BJ (cell line): ENCODE measurements at regions of chr1 and their contacts with region 1.

Region 1: GRCh38 chr1:93814059-93814794 is 64.8 kb downstream of the DNTTIP2 start:
- DNase-seq: no peak
- H3K4me3 ChIP-seq: no peak overlapping the region
- H3K27me3 ChIP-seq: no peaks in the 10 kb centered on the region
- CTCF ChIP-seq: peak; percentile 97

Region 2: GRCh38 chr1:93447516-93448291 is 366.5 kb before region 1 on chr1 and contains the start of gene FNBP1L:
- CTCF ChIA-PET with region 1: interaction called, 12 read pairs
- POLR2A ChIA-PET with region 1: no interaction called
- DNase-seq: no peak
- H3K4me3 ChIP-seq: peak within 1 kb of the TSS; percentile 62
- H3K27me3 ChIP-seq: no peaks in the 10 kb centered on the region
- CTCF ChIP-seq: no peak
- polyA plus RNA-seq, gene FNBP1L: 5.5 and 12.4 TPM in 2 replicates

Region 3: GRCh38 chr1:93629099-93630059 is 184.8 kb before region 1 on chr1:
- CTCF ChIA-PET with region 1: interaction called, 261 read pairs
- POLR2A ChIA-PET with region 1: interaction called, 5 read pairs
- DNase-seq: no peak
- H3K4me3 ChIP-seq: no peak overlapping the region
- H3K27me3 ChIP-seq: no peaks in the 10 kb centered on the region
- CTCF ChIP-seq: peak; percentile 72

Region 4: GRCh38 chr1:93680757-93681550 is 133.3 kb before region 1 on chr1:
- CTCF ChIA-PET with region 1: interaction called, 74 read pairs
- POLR2A ChIA-PET with region 1: no interaction called
- DNase-seq: peak; percentile 63
- H3K4me3 ChIP-seq: peak overlapping the region; percentile 78
- H3K27me3 ChIP-seq: no peaks in the 10 kb centered on the region
- CTCF ChIP-seq: peak; percentile 75

Region 5: GRCh38 chr1:93692983-93693591 is 121.1 kb before region 1 on chr1:
- CTCF ChIA-PET with region 1: interaction called, 17 read pairs
- POLR2A ChIA-PET with region 1: no interaction called
- DNase-seq: peak; percentile 59
- H3K4me3 ChIP-seq: no peak overlapping the region
- H3K27me3 ChIP-seq: no peaks in the 10 kb centered on the region
- CTCF ChIP-seq: no peak

Region 6: GRCh38 chr1:93734999-93735398 is 79.2 kb before region 1 on chr1:
- CTCF ChIA-PET with region 1: interaction called, 20 read pairs
- POLR2A ChIA-PET with region 1: no interaction called
- DNase-seq: no peak
- H3K4me3 ChIP-seq: no peak overlapping the region
- H3K27me3 ChIP-seq: no peaks in the 10 kb centered on the region
- CTCF ChIP-seq: peak; percentile 52

Region 7: GRCh38 chr1:93846211-93846991 is 32.2 kb after region 1 on chr1:
- CTCF ChIA-PET with region 1: interaction called, 32 read pairs
- POLR2A ChIA-PET with region 1: interaction called, 4 read pairs
- DNase-seq: no peak
- H3K4me3 ChIP-seq: peak overlapping the region; percentile 84
- H3K27me3 ChIP-seq: no peaks in the 10 kb centered on the region
- CTCF ChIP-seq: peak; percentile 59